ENCODE measurements at regions of chr21 and their contacts with region 1.

Region 1: GRCh38 chr21:31098576-31099005 is 60.3 kb upstream of the KRTAP19-8 start:
- DNase-seq: peak; percentile 80
- ATAC-seq: peak; percentile 69

Region 2: DNA sequence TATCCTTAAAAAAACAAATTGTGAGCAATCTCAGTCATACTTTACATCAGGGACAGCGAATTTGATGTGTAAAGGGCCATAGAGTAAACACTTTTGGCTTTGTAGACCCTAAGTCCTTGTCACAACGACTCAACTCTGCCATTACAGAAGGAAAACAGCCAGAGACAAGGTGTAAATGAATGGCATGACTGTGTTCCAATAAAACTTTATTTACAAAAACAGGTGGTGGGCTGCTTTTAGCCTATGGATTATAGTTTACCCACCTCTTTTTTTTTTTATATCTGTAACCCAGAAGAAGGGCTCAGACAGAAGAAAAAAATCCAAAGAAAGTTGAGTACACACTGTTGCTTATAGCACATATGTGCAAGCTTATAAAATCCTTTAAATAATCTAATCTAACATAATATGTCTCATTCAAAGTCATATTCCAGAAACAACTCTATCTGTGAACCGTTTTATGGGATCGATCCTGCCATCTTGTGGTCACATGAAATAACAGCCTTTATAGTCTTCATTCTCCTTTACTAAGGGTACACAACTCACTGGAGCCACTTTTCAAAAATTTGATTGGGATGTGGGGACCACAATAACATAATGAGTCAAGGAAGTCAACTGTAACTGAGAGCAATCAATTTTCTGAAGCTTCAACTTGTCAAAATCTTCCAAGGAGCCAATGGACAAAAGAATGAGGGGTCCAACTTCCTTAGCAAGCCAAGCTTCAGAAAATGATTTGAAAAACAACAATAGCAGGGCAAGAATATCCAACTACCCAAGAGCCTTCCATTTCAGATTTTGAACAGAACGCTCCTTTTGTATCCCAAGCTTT is 81.9 kb after region 1 on chr21:
- intact Hi-C with region 1: loop called (anchors 2 kb)
- DNase-seq: no peak
- ATAC-seq: peak; percentile 45